ENCODE measurements at regions of chr5 and their contacts with region 1.

Region 1: GRCh38 chr5:34459908-34460307 is 196.2 kb upstream of the RAI14 start:
- DNase-seq: no peak
- ATAC-seq: no peak

Region 2: DNA sequence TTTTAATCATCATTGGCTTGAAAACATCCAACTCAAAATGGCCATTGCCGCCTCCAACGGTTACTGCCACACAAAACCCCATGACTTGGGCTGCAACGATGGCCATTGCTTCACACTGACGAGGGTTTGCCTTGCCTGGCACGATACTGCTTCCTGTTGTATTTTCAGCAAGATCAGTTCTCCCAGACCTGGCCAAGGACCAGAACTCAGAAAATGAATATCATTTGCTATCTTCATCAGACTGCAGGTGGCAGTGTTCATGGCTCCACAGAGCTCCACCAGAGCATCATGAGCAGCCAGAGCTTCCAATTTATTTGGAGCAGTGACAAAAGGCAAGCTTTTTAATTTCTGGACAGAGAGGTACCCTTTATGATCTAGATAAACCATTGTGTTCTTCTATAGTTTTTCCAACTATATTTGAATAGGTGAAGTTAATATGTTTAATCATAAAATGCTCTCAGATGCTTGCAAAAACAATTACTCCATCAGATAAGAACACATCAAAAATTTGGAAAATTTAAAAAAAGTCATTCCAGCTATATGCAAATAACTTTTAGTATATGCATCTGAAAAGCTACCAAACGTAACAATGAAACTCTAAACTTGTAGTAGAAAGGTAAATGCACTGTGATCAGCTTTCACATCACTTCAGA is 462.5 kb before region 1 on chr5:
- intact Hi-C with region 1: loop called in 1 of 2 experiments (anchors 10 kb)
- DNase-seq: peak; percentile 56
- ATAC-seq: peak; percentile 81 to 82

Region 3: GRCh38 chr5:34007621-34008600 is 452.0 kb before region 1 on chr5 and contains the start of gene AMACR:
- intact Hi-C with region 1: loop called in 1 of 2 experiments (anchors 5 kb)
- DNase-seq: peak; percentile 93
- ATAC-seq: peak; percentile 98
- total RNA-seq, gene AMACR: 7.3 to 10.3 TPM

Region 4: GRCh38 chr5:34608859-34609648 is 149.1 kb after region 1 on chr5:
- intact Hi-C with region 1: no loop called
- DNase-seq: no peak
- ATAC-seq: peak; percentile 44 to 92